Posterior vena cava (tissue), 2 donors: ENCODE measurements at regions of chr6 and their contacts with region 1.

Region 1: DNA sequence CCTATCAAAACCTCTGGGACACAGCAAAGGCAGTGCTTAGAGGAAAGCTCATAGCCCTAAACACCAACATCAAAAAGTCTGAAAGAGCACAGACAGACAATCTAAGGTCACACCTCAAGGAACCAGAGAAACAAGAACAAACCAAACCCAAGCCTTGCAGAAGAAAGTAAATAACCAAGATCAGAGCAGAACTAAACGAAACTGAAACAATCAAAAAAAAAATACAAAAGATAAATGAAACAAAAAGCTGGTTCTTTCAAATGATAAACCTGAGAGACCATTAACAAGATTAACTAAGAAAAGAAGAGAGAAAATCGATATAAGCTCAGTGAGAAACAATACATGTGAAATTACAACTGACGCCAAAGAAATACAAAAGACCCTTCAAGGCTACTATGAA is 34.8 kb upstream of the RUNX2 start:
- DNase-seq: no peak

Region 2: GRCh38 chr6:44349904-44350649 is 943.2 kb before region 1 on chr6:
- intact Hi-C with region 1: loop called in 1 of 2 experiments (anchors 5 kb)
- DNase-seq: no peak

Region 3: GRCh38 chr6:45310118-45310788 is 16.9 kb after region 1 on chr6:
- intact Hi-C with region 1: no loop called
- DNase-seq: peak; percentile 51